Cardiac septum (tissue), 1 donor: ENCODE measurements at regions of chr9 and their contacts with region 1.

Region 1: DNA sequence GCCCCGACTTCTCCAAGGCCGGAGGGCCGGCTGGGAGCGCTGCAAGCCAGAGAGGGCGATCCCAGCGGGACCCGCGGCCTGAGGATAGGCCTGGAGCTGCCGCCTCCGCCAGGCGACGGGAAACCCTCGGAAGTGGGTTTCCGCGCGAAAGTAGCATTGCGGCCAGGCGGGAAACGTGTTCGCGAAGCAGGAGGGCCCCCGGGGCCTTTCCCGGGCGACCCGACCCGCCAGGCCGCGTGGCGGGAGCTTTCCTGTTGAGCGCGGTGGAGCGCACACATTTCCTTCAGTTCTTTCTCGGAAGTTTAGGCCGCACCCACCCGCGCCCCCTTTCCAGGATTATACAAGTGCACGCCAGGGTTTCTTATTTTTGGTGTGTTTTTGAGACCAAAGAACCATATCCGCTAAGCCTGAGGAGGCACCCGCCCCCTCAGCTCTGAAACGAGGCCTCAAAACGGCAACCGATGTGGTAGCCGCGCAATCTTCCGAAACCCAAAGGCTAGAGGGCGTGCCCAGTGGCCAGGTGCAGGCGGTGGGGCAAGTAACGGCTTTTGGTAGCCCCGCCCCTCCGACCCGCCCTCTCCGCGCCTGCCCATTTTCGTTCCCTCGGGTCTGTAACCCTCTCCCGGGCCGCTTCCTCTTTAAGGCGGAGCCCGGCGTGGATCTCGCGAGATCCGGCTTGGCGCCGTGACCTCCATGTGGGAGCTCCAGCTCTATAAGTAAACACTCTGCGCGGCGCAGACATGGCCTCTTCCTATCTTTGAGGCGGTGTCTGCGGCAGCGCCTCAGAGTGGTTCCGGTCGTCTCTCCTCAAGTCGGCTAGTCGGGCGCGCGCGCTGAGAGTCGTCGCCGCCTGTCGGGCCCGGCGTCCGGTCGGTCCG is at the start of gene UHRF2:
- DNase-seq: peak; percentile 99
- total RNA-seq, gene UHRF2: 14.3 TPM

Region 2: DNA sequence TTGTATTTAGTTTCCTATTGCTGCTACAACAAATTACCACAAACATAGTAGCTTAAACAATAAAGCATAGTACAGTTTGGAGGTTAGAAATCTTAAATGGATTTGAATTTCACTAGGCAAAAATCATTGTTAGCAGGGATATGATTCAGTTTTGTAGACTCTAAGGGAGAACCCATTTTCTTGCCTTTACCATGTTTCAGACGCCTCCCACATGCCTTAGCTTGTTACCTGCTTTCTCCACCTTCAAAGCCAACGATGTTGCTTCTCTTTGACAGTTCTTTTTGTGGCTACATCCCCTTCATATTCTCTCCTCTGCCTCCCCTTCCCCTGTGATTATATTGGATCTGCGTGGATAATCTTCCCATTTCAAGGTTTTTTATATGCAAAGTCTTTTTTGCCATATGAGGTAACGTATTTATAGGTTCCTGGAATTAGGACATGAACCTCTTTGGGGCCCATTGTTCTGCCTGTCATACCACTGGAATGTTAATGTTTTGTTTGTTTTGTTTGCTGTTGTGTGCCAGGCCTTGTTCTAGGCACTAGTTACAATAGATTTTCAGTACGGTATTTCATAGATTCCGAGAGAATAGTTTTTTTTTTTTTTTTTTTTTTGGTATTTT is 54.4 kb after region 1 on chr9:
- intact Hi-C with region 1: loop called (anchors 10 kb)
- DNase-seq: no peak

Region 3: DNA sequence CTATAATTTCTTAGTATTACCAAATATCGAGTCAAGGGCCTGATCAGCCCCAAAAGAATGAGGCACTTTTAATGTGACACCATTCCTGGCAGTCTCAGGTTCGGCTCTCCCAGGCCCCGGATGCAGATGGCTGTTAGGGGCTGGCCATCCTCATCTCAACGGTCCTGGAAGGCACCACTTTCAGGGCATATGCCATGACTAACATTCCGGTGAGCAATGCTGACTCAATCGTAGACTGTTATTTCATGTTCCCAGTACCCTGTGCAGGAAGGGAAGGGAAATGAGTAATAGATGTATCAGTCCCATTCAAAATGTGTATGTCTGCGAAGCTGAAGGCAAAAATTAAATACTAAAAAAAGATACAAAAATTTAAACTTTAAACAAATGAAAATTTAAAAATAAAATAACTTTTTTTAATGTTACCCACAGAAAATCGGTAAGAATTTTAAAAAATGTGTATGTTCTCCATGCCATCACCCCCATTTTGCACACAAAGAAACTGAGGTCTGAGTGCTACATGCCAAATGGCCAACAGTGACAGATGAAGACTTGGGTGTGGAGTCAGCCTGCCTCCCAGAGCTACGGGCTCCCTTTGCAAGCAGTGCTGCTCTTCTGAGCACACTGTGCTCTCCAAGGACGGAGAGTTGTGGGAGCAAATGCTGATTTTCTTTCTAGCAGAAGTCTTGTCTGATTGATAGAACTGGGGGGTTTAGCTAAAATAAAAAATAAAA is 153.8 kb after region 1 on chr9:
- intact Hi-C with region 1: loop called (anchors 5 kb)
- DNase-seq: no peak